ENCODE measurements at regions of chr13 and their contacts with region 1.

Region 1: GRCh38 chr13:49443704-49444523 is at the starts of genes CAB39L and SETDB2:
- DNase-seq: peak; percentile 100
- H3K4me3 ChIP-seq: peak within 1 kb of the TSS; percentile 82
- H3K27ac ChIP-seq: peak within 1 kb of the TSS; percentile 90
- H3K4me1 ChIP-seq: peaks cover 52% of the 10 kb centered on the region
- CTCF ChIP-seq: peak; percentile 65
- total RNA-seq, gene CAB39L: 5.4 and 9.6 TPM in 2 replicates
- total RNA-seq, gene SETDB2: 22.0 and 23.3 TPM in 2 replicates

Region 2: DNA sequence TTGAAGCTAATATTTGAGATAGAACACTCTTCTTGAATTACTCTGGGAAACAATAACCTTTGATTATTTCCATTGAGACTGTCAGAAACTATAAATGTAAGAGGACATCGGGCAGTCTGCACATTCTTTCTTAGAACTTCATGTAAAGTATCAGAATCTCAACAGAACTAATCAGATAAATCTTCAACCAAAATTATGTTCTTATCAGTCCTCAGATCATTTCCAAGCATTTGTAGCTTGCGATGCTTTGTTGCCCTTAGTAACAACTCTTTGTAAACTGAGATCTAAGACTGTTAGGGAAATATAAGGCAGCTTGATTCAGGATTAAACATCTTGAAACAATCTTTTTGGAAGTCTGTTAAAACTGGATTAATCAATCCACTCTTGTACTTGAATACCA is 397.9 kb before region 1 on chr13:
- CTCF ChIA-PET with region 1: no interaction called
- POLR2A ChIA-PET with region 1: no interaction called
- intact Hi-C with region 1: no loop called
- DNase-seq: no peak
- H3K4me3 ChIP-seq: no peak overlapping the region
- H3K27ac ChIP-seq: no peak overlapping the region
- H3K4me1 ChIP-seq: no peaks in the 10 kb centered on the region
- CTCF ChIP-seq: no peak

Region 3: GRCh38 chr13:49300739-49301589 is 142.9 kb before region 1 on chr13:
- CTCF ChIA-PET with region 1: no interaction called
- POLR2A ChIA-PET with region 1: interaction called, 3 read pairs
- intact Hi-C with region 1: loop called (anchors 2 kb)
- DNase-seq: peak; percentile 90
- H3K4me3 ChIP-seq: peak overlapping the region; percentile 39
- H3K27ac ChIP-seq: no peak overlapping the region
- H3K4me1 ChIP-seq: peaks cover 44% of the 10 kb centered on the region
- CTCF ChIP-seq: peak; percentile 98

Region 4: DNA sequence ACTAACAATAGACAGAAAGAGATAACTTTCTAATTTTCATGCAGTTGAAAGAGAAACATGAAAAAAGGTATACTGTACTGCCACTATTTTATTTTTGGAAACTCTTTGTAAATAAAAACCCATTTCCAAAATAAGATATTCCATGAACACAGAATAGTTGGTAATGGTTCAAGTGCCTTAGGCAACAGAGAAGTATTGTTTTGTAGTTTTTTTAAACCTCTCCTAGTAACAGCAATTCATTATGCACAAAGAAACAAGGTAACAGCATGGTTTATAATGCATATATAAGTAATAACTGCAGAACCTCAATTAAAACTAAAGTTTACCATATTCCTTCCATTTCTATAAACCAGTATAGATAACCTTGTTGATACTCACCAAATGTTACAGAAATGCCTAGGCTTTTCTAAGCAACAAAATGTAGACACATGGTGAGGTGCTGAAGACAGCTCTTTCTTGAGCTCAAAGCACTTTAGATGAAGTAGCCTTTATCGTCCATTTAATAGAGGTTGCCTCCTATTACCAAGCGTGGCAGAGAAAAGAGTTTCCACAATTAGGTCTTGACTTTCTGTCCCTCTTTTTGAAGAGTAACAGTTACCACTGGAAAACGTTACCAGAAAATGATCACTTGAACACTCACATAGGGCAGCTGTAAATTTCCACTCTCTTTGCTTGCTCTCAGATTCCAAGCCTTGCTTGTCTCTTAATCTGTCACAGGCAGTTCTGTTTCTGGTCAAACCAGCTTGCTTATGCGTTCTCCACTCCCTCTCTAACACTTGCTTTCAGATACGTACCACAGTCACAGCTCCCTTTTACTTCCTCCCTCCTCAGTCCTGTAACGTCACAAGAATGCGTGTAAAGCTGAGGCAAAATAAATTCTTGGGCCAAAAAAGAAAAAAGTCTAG is 42.9 kb before region 1 on chr13:
- CTCF ChIA-PET with region 1: no interaction called
- POLR2A ChIA-PET with region 1: interaction called, 32 read pairs
- intact Hi-C with region 1: loop called (anchors 1 kb)
- DNase-seq: peak; percentile 87
- H3K4me3 ChIP-seq: peak overlapping the region; percentile 75
- H3K27ac ChIP-seq: peak overlapping the region; percentile 86
- H3K4me1 ChIP-seq: peaks cover 35% of the 10 kb centered on the region
- CTCF ChIP-seq: no peak

Region 5: DNA sequence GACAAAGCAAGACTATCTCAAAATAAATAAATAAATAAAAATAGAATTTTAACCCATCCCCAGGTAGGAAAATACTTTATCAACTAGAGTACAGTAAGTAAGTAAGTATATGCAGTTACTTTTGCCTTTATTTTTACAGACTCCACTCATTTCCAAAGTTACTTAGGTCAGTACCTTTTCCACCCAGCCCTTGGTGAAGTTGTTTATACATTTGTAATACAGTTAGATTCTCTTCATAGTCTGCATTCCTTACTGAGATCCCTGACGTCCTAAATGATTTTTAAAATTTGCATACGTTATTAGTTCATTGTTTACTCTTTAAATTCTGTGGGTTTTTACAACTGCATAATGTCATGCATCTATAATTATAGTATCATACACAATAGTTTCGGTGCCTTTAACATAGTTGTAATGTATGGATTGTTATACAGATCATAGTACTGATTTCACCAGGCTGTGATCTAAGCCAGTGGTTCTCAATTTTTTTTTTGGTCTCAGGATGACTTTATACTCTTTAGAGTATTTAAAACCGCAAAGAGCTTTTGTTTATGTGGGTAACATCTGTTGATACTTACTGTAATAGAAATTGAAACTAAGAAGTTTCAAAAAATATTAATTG is 10.6 kb after region 1 on chr13:
- CTCF ChIA-PET with region 1: no interaction called
- POLR2A ChIA-PET with region 1: interaction called, 13 read pairs
- intact Hi-C with region 1: no loop called
- DNase-seq: no peak
- H3K4me3 ChIP-seq: no peak overlapping the region
- H3K27ac ChIP-seq: peak overlapping the region; percentile 42
- H3K4me1 ChIP-seq: peaks cover 33% of the 10 kb centered on the region
- CTCF ChIP-seq: no peak

Region 6: GRCh38 chr13:49540552-49540951 is 96.6 kb after region 1 on chr13:
- CTCF ChIA-PET with region 1: no interaction called
- POLR2A ChIA-PET with region 1: interaction called, 8 read pairs
- intact Hi-C with region 1: loop called (anchors 2 kb)
- DNase-seq: peak; percentile 69
- H3K4me3 ChIP-seq: peak overlapping the region; percentile 61
- H3K27ac ChIP-seq: peak overlapping the region; percentile 81
- H3K4me1 ChIP-seq: peaks cover 42% of the 10 kb centered on the region
- CTCF ChIP-seq: no peak

Region 7: DNA sequence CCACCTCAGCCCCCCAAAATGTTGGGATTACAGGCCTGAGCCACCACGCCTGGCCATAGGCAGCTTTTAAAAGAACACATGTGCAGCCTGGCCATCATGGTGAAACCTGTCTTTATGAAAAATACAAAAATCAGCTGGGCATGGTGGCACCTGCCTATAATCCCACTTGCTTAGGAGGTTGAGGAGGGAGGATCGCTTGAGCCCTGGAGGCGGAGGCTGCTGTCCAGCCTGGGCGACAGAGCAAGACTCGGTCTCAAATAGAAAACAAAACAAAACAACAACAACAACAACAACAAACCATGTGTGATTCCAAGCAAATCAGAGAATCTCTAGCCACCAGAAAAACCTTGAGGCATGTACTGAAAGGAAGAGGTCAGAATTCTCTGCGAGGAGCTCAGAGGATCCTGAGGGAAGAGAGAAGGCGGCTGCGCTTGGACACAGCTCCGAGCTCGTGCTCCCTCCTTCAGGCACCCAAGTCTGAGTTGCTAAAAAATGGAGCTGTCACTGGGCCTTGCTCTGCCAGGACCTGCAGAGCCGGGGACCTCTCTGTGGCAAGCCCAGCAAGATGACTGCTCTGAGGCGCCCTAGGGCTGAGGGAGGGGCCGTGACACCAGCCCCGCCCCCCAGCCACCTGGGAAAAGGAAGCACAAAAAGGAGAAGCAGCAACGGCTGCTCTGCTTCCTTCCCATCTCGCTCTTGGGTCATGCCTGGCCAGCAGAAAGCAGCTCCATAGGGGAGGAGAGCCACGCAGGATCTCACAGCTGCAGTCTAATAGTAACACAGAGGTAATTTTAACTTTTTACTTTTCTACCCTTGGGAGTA is 184.1 kb after region 1 on chr13 and contains the start of gene ARL11:
- CTCF ChIA-PET with region 1: no interaction called
- POLR2A ChIA-PET with region 1: interaction called, 5 read pairs
- intact Hi-C with region 1: loop called (anchors 2 kb)
- DNase-seq: peak; percentile 93
- H3K4me3 ChIP-seq: peak within 1 kb of the TSS; percentile 90
- H3K27ac ChIP-seq: peak within 1 kb of the TSS; percentile 72
- H3K4me1 ChIP-seq: peaks cover 34% of the 10 kb centered on the region
- CTCF ChIP-seq: no peak
- total RNA-seq, gene ARL11: 5.9 and 8.3 TPM in 2 replicates

Measured in OCI-LY7 (cell line).